Activated CD4-positive, alpha-beta T cell treated with anti-CD3 and anti-CD28 coated beads for 36 hours (primary cell): ENCODE measurements at regions of chr9 and their contacts with region 1.

Region 1: DNA sequence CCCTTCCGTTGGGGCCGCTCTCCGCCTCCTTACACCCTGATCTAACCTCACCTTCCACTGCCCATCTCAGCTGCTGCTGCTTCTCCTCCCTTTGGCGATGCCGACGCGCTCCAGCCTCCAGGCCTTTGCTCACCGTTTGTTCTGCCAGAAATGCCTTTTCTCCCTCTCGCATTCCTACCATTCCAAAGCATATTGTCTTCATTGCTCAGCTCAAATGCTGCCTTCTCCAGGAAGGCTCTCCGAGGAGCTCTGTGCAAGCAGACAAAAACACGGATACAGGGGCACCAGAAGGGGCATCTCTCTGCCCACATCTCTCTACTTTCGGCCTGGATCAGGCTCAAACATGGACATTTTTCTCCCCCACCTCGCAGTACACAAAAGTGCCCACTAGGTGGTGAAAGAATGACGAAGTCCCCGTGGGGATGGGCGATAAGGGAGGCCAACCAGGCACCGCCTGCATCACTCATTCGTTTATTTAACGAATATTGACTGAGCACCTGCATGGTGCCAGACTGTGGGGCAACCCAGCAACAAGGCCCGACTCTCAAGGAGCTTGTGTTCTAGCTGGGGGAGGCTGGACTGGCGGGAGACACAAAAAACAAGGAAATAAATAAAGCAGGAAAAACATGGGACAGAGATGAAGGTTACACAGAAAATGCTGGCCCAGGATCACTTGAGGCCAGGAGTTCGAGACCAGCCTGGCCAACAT is 7.3 kb upstream of the GRHPR start:
- DNase-seq: peak; percentile 88
- ATAC-seq: peak; percentile 72
- H3K4me3 Mint-ChIP-seq: no peak overlapping the region
- H3K27ac Mint-ChIP-seq: peak overlapping the region; percentile 75
- H3K4me1 Mint-ChIP-seq: peaks cover 28% of the 10 kb centered on the region
- H3K27me3 Mint-ChIP-seq: no peaks in the 10 kb centered on the region

Region 2: DNA sequence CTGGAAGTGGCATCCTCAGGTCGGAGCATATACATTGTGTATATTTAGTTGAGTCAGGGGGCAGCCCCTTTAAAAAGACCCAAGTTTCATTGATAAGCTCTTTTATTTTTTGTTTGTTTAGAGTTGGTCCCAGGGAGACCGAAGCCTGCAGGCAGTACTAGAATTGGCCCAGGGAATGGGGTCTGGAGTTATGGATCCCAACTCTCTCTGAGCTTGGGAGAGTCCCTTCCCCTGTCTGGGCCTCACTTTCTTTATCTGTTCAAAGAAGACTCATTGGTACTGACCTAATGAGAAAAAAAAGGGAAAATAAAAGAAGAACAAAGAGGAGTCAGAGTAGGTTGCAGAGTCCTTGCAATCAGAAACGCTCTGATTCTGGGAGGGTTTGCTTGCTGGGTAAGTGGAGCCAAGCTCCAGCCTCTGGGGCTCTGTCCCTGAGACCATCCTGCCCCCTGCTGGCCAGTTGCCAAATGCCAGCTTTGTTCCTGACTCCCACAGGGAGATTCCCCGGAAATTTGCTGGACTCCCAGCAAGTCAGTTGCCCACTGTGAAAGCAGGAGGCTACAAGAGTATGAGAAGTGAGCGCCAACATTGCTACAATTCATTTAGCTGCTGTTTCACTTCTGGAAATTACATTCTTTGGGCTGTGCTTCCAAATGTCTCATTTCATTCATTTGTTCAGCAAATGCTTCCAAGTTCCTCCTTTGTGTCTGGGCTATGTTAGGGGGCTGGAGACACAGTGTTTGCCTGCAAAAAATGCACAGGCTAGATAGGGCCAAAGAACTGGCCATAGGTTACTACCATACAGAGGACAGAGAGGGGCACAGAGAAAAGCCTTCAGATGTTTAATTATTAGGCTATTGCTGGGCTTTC is 686.3 kb before region 1 on chr9:
- CTCF ChIA-PET with region 1: no interaction called
- POLR2A ChIA-PET with region 1: no interaction called
- intact Hi-C with region 1: no loop called
- DNase-seq: peak; percentile 86
- ATAC-seq: peak; percentile 69
- H3K4me3 Mint-ChIP-seq: no peak overlapping the region
- H3K27ac Mint-ChIP-seq: no peak overlapping the region
- H3K4me1 Mint-ChIP-seq: no peaks in the 10 kb centered on the region
- H3K27me3 Mint-ChIP-seq: no peaks in the 10 kb centered on the region

Region 3: DNA sequence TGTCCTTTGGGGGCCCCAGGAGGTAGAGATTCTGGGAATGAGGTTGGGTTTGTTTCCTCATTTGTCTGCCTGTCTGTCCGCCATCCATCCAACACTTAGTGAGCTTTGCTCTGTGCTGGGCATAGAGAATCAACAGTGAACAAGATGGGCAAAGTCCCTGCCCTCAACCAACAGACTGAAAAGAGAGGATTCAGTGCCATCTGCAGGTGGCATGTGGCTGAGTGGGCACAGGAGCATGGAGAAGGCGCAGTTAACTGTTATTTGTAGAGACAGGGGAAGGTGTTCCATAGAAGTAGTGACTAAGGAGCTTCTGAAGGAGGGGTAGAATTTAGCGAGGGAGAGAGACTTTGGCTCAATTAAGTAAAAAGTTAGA is 93.7 kb after region 1 on chr9:
- CTCF ChIA-PET with region 1: no interaction called
- POLR2A ChIA-PET with region 1: no interaction called
- intact Hi-C with region 1: loop called in 1 of 2 experiments (anchors 1 kb)
- DNase-seq: no peak
- ATAC-seq: no peak
- H3K4me3 Mint-ChIP-seq: no peak overlapping the region
- H3K27ac Mint-ChIP-seq: no peak overlapping the region
- H3K4me1 Mint-ChIP-seq: peaks cover 3% of the 10 kb centered on the region
- H3K27me3 Mint-ChIP-seq: no peaks in the 10 kb centered on the region